ENCODE measurements at regions of chr17 and their contacts with region 1.

Region 1: DNA sequence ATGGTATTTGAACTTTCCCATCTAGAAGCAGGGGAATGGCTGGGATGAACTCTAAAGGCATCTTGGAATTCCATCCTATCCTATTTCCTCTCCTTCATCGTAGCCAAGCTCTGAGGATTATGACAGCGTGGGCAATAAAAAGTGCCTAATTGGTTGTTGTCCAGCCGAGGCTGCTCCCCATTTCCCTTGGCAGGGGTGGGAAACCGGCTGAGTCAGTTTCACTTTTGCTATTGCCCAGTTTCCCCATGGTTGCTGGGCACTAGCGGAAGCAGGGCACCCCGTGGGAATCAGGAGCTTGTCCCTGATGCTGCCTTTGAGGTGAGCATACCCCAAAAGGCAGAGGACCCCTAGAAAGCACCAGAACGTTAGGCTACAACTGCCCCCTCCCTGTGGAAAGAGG is 13.8 kb upstream of the SP2 start:
- DNase-seq: no peak
- H3K4me3 ChIP-seq: no peak overlapping the region
- H3K27ac ChIP-seq: no peak overlapping the region
- H3K4me1 ChIP-seq: peaks cover 0 to 8% of the 10 kb centered on the region in 2 experiments; a peak in 1 of 4 replicates
- H3K27me3 ChIP-seq: peaks cover 25% of the 10 kb centered on the region; the same call in 1 of the 2 replicates
- CTCF ChIP-seq: no peak
- EP300 ChIP-seq: no peak
- RAD21 ChIP-seq: no peak

Region 2: DNA sequence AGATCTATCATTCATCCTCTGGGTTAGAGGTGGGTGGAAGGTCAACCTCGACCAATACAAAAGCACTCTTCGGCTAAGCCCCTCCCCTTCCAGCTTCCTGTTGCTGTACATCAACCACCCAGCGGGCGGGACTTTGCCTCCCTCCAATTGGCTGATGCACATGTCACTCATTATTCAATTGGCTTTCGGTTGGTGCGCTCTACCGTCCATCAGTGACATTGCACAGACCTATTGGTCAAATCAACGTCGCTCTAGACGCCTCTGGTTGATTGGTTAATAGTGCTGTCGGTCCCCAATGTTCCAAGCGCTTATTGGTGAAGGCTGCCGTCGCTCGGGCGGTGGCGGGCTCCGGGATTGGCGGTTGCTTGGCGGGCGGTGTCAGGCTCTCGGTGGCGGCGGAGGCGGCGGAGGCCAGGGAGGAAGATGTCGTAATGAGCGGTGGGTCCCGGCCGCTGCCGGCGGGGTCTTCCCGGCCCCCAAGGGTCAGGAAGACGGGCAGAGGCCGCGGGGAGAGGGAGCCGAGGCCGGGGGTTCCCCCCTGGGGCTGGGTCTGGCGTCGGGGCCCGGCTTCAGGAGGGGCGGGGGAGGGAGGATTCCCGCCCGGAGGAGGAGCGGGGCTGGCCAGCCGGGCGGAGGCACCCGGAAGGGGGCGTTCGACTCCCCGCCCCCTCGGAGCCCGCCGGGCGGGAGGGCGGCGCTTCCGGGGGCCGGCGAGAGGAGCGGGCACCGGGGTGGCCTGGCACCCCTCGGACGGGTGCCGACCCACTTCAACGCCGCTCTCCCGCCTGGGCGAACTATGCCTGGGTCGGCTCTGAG is 13.8 kb after region 1 on chr17 and contains the start of gene SP2:
- CTCF ChIA-PET with region 1: interaction called, 51 read pairs
- POLR2A ChIA-PET with region 1: no interaction called
- DNase-seq: peak; percentile 99
- H3K4me3 ChIP-seq: peak within 1 kb of the TSS; percentile 94
- H3K27ac ChIP-seq: peak within 1 kb of the TSS; percentile 88 to 94
- H3K4me1 ChIP-seq: peaks cover 4 to 19% of the 10 kb centered on the region in 2 experiments; a peak in 3 of 4 replicates
- H3K27me3 ChIP-seq: no peaks in the 10 kb centered on the region
- CTCF ChIP-seq: no peak
- EP300 ChIP-seq: no peak; a peak in 1 of 4 replicates
- RAD21 ChIP-seq: no peak
- polyA plus RNA-seq, gene SP2: 8.8 and 16.7 TPM in 2 replicates